ENCODE measurements at regions of chr11 and their contacts with region 1.

Region 1: GRCh38 chr11:6682936-6683861 is at the start of gene MRPL17:
- DNase-seq: peak; percentile 100
- ATAC-seq: peak; percentile 96
- H3K4me3 ChIP-seq: peak within 1 kb of the TSS; percentile 80 to 91 (median 84)
- H3K4me3 Mint-ChIP-seq: peak within 1 kb of the TSS; percentile 99
- H3K27ac ChIP-seq: peak within 1 kb of the TSS; percentile 74 to 91
- H3K27ac Mint-ChIP-seq: peak within 1 kb of the TSS; percentile 99
- H3K4me1 ChIP-seq: peaks cover 12% of the 10 kb centered on the region in 2 donors
- H3K4me1 Mint-ChIP-seq: peaks cover 25% of the 10 kb centered on the region
- H3K27me3 ChIP-seq: no peaks in the 10 kb centered on the region
- H3K27me3 Mint-ChIP-seq: no peaks in the 10 kb centered on the region
- CTCF ChIP-seq: peak; percentile 88
- total RNA-seq, gene MRPL17: 18.2 and 23.1 TPM in 2 replicates

Region 2: GRCh38 chr11:6234387-6235107 is 448.7 kb before region 1 on chr11 and contains the start of gene FHIP1B:
- CTCF ChIA-PET with region 1: no interaction called
- POLR2A ChIA-PET with region 1: no interaction called
- intact Hi-C with region 1: loop called (anchors 2 kb)
- DNase-seq: peak; percentile 100
- ATAC-seq: peak; percentile 92
- H3K4me3 ChIP-seq: peak within 1 kb of the TSS; percentile 71 to 90 (median 87)
- H3K4me3 Mint-ChIP-seq: peak within 1 kb of the TSS; percentile 98
- H3K27ac ChIP-seq: peak within 1 kb of the TSS; percentile 69 to 90
- H3K27ac Mint-ChIP-seq: peak within 1 kb of the TSS; percentile 91
- H3K4me1 ChIP-seq: peaks cover 7 to 13% of the 10 kb centered on the region in 2 donors
- H3K4me1 Mint-ChIP-seq: peaks cover 29% of the 10 kb centered on the region
- H3K27me3 ChIP-seq: peaks cover 0 to 9% (median 2%) of the 10 kb centered on the region in 4 experiments
- H3K27me3 Mint-ChIP-seq: no peaks in the 10 kb centered on the region
- CTCF ChIP-seq: no peak
- total RNA-seq, gene FHIP1B: 44.1 and 48.3 TPM in 2 replicates

Region 3: DNA sequence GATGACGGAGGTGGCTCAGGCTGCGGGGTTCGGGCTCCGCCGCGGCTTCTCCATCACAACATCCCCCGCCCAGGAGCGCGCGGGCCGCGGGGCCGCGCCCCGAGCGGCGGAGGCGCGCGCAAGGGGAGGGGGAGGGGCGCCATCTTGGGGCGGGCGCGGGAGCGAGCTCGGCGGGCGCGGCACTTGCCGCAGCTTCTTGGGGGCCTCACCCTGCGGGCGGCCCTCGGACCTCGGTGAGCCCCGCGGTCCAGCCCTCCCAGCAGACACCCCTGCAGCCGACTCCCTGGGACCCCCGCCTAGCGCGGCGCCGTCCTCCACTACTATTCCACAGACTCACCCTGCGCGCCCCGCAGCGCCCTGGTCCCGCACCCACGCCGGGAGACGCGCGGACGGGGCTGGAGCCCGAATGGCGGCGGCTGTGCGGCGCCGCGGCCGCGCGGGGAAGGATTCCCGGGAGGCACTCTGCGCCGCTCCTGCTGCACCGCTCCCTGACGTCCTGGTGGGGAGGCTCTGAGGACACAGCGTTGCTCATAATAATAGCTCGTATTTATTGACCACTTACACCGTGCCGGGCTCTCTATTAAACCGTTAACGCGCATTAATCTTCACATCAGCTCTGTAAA is 264.1 kb before region 1 on chr11 and contains the start of gene APBB1:
- CTCF ChIA-PET with region 1: no interaction called
- POLR2A ChIA-PET with region 1: interaction called, 3 read pairs
- intact Hi-C with region 1: loop called (anchors 1 kb)
- DNase-seq: peak; percentile 87
- ATAC-seq: peak; percentile 83
- H3K4me3 ChIP-seq: peak within 1 kb of the TSS; percentile 27 to 85 (median 71)
- H3K4me3 Mint-ChIP-seq: peak within 1 kb of the TSS; percentile 85
- H3K27ac ChIP-seq: peak within 1 kb of the TSS; percentile 5 to 66
- H3K27ac Mint-ChIP-seq: peak within 1 kb of the TSS; percentile 76
- H3K4me1 ChIP-seq: peaks cover 29 to 32% of the 10 kb centered on the region in 2 donors
- H3K4me1 Mint-ChIP-seq: peaks cover 7% of the 10 kb centered on the region
- H3K27me3 ChIP-seq: peaks cover 0 to 8% (median 7%) of the 10 kb centered on the region in 4 experiments
- H3K27me3 Mint-ChIP-seq: peaks cover 28% of the 10 kb centered on the region
- CTCF ChIP-seq: peak; percentile 17
- total RNA-seq, gene APBB1: 31.4 and 32.5 TPM in 2 replicates

Region 4: DNA sequence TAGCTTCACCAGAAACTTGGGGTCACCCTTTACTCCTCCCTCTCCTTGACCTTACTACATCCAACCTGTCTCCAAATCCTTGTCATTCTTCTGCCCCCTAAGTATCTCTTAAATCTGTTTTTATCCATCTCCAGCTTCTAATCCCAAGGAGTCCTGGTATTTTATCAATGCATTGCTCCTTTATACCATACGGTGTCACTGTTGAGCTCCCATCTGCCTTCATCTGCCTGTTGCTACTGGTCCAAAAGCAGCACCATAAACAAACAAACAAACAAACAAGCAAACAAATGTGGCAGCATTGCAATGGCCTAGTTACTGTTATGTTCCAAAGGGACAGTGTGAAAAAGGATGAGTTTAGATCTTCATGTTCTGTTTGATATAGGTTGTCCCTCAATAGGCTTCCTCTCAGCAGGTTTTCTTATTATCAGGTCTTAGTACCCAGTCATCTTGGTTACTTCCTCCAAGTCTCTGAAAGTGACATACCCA is 151.9 kb before region 1 on chr11:
- CTCF ChIA-PET with region 1: interaction called, 49 read pairs
- POLR2A ChIA-PET with region 1: no interaction called
- intact Hi-C with region 1: loop called (anchors 1 kb)
- DNase-seq: peak; percentile 66
- ATAC-seq: peak; percentile 57
- H3K4me3 ChIP-seq: no peak overlapping the region
- H3K4me3 Mint-ChIP-seq: no peak overlapping the region
- H3K27ac ChIP-seq: no peak overlapping the region
- H3K27ac Mint-ChIP-seq: no peak overlapping the region
- H3K4me1 ChIP-seq: peaks cover 4 to 5% of the 10 kb centered on the region in 2 donors
- H3K4me1 Mint-ChIP-seq: peaks cover 5% of the 10 kb centered on the region
- H3K27me3 ChIP-seq: no peaks in the 10 kb centered on the region
- H3K27me3 Mint-ChIP-seq: no peaks in the 10 kb centered on the region
- CTCF ChIP-seq: peak; percentile 83

Region 5: DNA sequence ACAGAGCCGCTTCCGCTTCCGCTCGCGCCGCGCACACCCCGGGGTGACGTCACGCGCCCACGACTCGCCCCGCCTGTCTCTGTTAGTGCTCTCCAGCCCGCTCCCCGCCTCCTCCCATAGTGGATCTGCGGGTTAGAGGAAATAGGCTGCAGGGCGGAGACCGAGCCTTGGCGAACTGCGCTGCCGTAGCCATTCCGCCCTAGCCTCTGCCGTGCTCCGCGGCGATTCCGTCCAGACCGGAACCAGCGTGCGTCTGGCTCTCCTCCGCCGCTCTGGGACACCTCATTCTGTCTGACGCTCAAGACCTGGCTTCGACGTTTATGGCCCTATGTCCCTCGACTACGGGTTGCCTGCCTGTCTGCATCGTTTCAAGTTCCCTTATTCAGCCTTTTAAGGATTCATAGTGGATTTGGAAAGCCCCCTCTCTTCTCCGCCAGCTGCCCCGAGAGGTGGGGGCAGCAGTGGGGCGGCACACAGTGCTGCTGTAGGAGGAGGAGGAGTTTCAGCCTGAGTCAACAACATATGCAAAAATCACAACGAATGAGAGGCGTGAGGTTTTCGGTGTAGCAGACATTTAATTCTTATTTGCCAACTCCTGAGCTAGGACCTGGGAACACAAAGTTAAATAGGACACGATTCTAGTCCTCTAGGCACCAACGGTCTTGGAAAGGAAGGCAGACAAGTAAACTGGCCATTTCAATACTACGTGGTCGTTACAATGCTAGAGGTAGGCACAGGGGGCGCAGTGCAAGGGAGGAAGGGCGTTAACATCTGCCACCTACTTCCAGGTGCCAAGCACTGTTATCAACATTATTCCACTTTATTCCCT is 70.8 kb before region 1 on chr11 and contains the start of gene TAF10:
- CTCF ChIA-PET with region 1: interaction called, 52 read pairs
- POLR2A ChIA-PET with region 1: interaction called, 19 read pairs
- intact Hi-C with region 1: loop called (anchors 1 kb)
- DNase-seq: peak; percentile 96
- ATAC-seq: peak; percentile 80
- H3K4me3 ChIP-seq: peak within 1 kb of the TSS; percentile 79 to 95 (median 85)
- H3K4me3 Mint-ChIP-seq: peak within 1 kb of the TSS; percentile 95
- H3K27ac ChIP-seq: peak within 1 kb of the TSS; percentile 99 to 100
- H3K27ac Mint-ChIP-seq: peak within 1 kb of the TSS; percentile 96
- H3K4me1 ChIP-seq: peaks cover 23 to 32% of the 10 kb centered on the region in 2 donors
- H3K4me1 Mint-ChIP-seq: peaks cover 37% of the 10 kb centered on the region
- H3K27me3 ChIP-seq: no peaks in the 10 kb centered on the region
- H3K27me3 Mint-ChIP-seq: no peaks in the 10 kb centered on the region
- CTCF ChIP-seq: peak; percentile 41
- total RNA-seq, gene TAF10: 92.2 and 114 TPM in 2 replicates

Region 6: GRCh38 chr11:6646918-6647679 is 36.1 kb before region 1 on chr11:
- CTCF ChIA-PET with region 1: no interaction called
- POLR2A ChIA-PET with region 1: interaction called, 3 read pairs
- intact Hi-C with region 1: loop called (anchors 5 kb)
- DNase-seq: peak; percentile 72
- ATAC-seq: peak; percentile 74
- H3K4me3 ChIP-seq: peak overlapping the region in 4 of 5 experiments; percentile 5 to 26 (median 16)
- H3K4me3 Mint-ChIP-seq: no peak overlapping the region
- H3K27ac ChIP-seq: peak overlapping the region; percentile 63 to 78
- H3K27ac Mint-ChIP-seq: no peak overlapping the region
- H3K4me1 ChIP-seq: peaks cover 44 to 52% of the 10 kb centered on the region in 2 donors
- H3K4me1 Mint-ChIP-seq: no peaks in the 10 kb centered on the region
- H3K27me3 ChIP-seq: no peaks in the 10 kb centered on the region
- H3K27me3 Mint-ChIP-seq: no peaks in the 10 kb centered on the region
- CTCF ChIP-seq: no peak

Region 7: GRCh38 chr11:6746086-6746618 is 63.0 kb after region 1 on chr11:
- CTCF ChIA-PET with region 1: interaction called, 10 read pairs
- POLR2A ChIA-PET with region 1: interaction called, 4 read pairs
- intact Hi-C with region 1: no loop called
- DNase-seq: peak; percentile 74
- ATAC-seq: peak; percentile 84
- H3K4me3 ChIP-seq: peak overlapping the region; percentile 54 to 95 (median 80)
- H3K4me3 Mint-ChIP-seq: no peak overlapping the region
- H3K27ac ChIP-seq: peak overlapping the region; percentile 83 to 95
- H3K27ac Mint-ChIP-seq: no peak overlapping the region
- H3K4me1 ChIP-seq: peaks cover 49 to 58% of the 10 kb centered on the region in 2 donors
- H3K4me1 Mint-ChIP-seq: peaks cover 25% of the 10 kb centered on the region
- H3K27me3 ChIP-seq: no peaks in the 10 kb centered on the region
- H3K27me3 Mint-ChIP-seq: no peaks in the 10 kb centered on the region
- CTCF ChIP-seq: no peak

Region 8: DNA sequence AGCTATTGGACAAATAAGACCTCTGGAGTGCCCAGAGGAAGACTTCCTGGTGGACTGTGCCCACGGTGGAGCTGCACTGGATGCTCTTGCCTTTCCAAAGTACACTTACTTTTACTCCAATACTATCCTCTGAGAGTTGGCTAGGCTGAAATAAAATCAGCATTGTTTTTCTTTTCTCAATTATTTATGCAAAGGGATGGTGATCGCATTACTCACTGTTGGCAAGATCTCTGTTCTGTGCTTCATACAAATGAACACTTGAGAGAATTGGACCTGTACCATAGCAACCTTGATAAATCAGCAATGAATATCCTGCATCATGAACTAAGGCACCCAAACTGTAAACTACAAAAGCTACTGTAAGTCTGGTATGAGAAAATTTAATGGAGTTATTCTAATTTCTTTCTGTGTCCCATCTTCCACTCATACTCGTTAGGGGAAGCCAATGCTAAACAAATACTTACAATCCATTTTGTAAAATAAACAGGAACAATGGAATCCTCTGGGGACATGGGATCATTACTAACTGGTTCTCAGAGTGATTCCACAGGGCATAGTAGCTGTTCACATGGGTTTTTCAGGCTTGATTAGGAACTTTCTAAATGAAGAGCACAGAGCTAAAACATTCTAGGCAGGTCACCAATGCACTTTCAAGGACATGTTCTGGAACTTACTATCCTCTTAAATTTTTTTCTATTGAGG is 363.4 kb after region 1 on chr11:
- CTCF ChIA-PET with region 1: no interaction called
- POLR2A ChIA-PET with region 1: no interaction called
- intact Hi-C with region 1: no loop called
- DNase-seq: no peak
- ATAC-seq: no peak
- H3K4me3 ChIP-seq: no peak overlapping the region
- H3K4me3 Mint-ChIP-seq: no peak overlapping the region
- H3K27ac ChIP-seq: no peak overlapping the region
- H3K27ac Mint-ChIP-seq: no peak overlapping the region
- H3K4me1 ChIP-seq: no peaks in the 10 kb centered on the region
- H3K4me1 Mint-ChIP-seq: no peaks in the 10 kb centered on the region
- H3K27me3 ChIP-seq: no peaks in the 10 kb centered on the region
- H3K27me3 Mint-ChIP-seq: peaks cover 11% of the 10 kb centered on the region
- CTCF ChIP-seq: no peak

Measured in B cell (primary cell).